Activated CD4-positive, alpha-beta T cell treated with anti-CD3 and anti-CD28 coated beads, Interleukin-2, amount 10 ng/mL, durations not matched to agents 24 days and 14 days (primary cell): ENCODE measurements at regions of chr20 and their contacts with region 1.

Region 1: GRCh38 chr20:20489054-20489453 is 121.2 kb downstream of the INSM1 start:
- DNase-seq: no peak
- H3K4me3 Mint-ChIP-seq: peak overlapping the region; percentile 79
- H3K27ac Mint-ChIP-seq: peak overlapping the region; percentile 91
- H3K4me1 Mint-ChIP-seq: peaks cover 50% of the 10 kb centered on the region
- H3K27me3 Mint-ChIP-seq: no peaks in the 10 kb centered on the region

Region 2: GRCh38 chr20:20407891-20408805 is 80.9 kb before region 1 on chr20:
- intact Hi-C with region 1: loop called (anchors 1 kb)
- DNase-seq: no peak
- H3K4me3 Mint-ChIP-seq: no peak overlapping the region
- H3K27ac Mint-ChIP-seq: no peak overlapping the region
- H3K4me1 Mint-ChIP-seq: peaks cover 14% of the 10 kb centered on the region
- H3K27me3 Mint-ChIP-seq: no peaks in the 10 kb centered on the region

Region 3: GRCh38 chr20:20452254-20452676 is 36.8 kb before region 1 on chr20:
- intact Hi-C with region 1: loop called (anchors 1 kb)
- DNase-seq: peak; percentile 86
- H3K4me3 Mint-ChIP-seq: peak overlapping the region; percentile 81
- H3K27ac Mint-ChIP-seq: peak overlapping the region; percentile 85
- H3K4me1 Mint-ChIP-seq: peaks cover 32% of the 10 kb centered on the region
- H3K27me3 Mint-ChIP-seq: no peaks in the 10 kb centered on the region

Region 4: GRCh38 chr20:20568604-20569205 is 79.7 kb after region 1 on chr20:
- intact Hi-C with region 1: loop called (anchors 2 kb)
- DNase-seq: peak; percentile 73
- H3K4me3 Mint-ChIP-seq: no peak overlapping the region
- H3K27ac Mint-ChIP-seq: no peak overlapping the region
- H3K4me1 Mint-ChIP-seq: peaks cover 12% of the 10 kb centered on the region
- H3K27me3 Mint-ChIP-seq: no peaks in the 10 kb centered on the region

Region 5: DNA sequence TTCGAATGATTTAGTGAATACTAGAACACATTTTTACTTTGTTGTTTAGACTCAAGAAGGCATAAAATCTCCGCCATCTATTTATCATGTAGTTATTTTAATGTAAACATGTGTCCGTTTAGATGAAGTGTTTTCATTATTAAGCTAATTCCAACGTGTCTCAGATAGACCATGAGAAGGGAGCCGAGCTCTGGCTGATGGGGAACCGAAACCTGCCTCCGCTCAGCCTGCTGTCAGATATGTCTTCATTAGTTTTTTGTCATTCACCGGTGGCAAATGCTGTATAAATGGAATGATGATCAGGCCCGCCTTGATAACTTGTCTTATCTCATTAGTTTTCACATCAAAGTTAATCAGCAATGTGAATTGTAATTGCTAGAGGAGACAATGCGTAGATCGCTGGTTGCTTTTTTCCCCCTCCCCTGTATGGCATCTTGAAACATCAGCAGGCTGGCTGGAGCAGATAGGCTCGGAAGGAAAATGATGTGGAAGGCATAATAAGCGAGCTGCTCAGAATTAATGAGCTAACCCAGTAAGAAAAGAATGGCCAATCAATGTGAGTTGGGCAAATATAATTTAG is 480.7 kb after region 1 on chr20:
- intact Hi-C with region 1: no loop called
- DNase-seq: no peak
- H3K4me3 Mint-ChIP-seq: no peak overlapping the region
- H3K27ac Mint-ChIP-seq: no peak overlapping the region
- H3K4me1 Mint-ChIP-seq: no peaks in the 10 kb centered on the region
- H3K27me3 Mint-ChIP-seq: no peaks in the 10 kb centered on the region